ENCODE measurements at regions of chr14 and their contacts with region 1.

Region 1: GRCh38 chr14:23286020-23286905 is at the start of gene HOMEZ:
- DNase-seq: peak; percentile 100
- ATAC-seq: peak; percentile 99
- H3K4me3 ChIP-seq: peak within 1 kb of the TSS; percentile 83 to 96 (median 83)
- H3K27ac ChIP-seq: peak within 1 kb of the TSS; percentile 83
- H3K4me1 ChIP-seq: peaks cover 26% of the 10 kb centered on the region
- H3K27me3 ChIP-seq: no peaks in the 10 kb centered on the region; a peak in 1 of 5 replicates
- CTCF ChIP-seq: peak; percentile 58
- EP300 ChIP-seq: peak in 1 of 2 experiments; percentile 48; a peak in 2 of 4 replicates
- POLR2A ChIP-seq: peak in 1 of 2 experiments; percentile 93; a peak in 2 of 4 replicates
- RAD21 ChIP-seq: no peak; the same call in 1 of the 2 replicates
- total RNA-seq, gene HOMEZ: 13.6 and 14.5 TPM in 2 replicates

Region 2: GRCh38 chr14:22761734-22762133 is 524.5 kb before region 1 on chr14:
- CTCF ChIA-PET with region 1: no interaction called
- POLR2A ChIA-PET with region 1: no interaction called
- in situ Hi-C with region 1: no loop called
- intact Hi-C with region 1: no loop called
- DNase-seq: no peak
- ATAC-seq: no peak
- H3K4me3 ChIP-seq: no peak overlapping the region
- H3K27ac ChIP-seq: no peak overlapping the region
- H3K4me1 ChIP-seq: peaks cover 9% of the 10 kb centered on the region
- H3K27me3 ChIP-seq: no peaks in the 10 kb centered on the region; a peak in 1 of 5 replicates
- CTCF ChIP-seq: no peak
- EP300 ChIP-seq: no peak
- POLR2A ChIP-seq: no peak
- RAD21 ChIP-seq: no peak

Region 3: DNA sequence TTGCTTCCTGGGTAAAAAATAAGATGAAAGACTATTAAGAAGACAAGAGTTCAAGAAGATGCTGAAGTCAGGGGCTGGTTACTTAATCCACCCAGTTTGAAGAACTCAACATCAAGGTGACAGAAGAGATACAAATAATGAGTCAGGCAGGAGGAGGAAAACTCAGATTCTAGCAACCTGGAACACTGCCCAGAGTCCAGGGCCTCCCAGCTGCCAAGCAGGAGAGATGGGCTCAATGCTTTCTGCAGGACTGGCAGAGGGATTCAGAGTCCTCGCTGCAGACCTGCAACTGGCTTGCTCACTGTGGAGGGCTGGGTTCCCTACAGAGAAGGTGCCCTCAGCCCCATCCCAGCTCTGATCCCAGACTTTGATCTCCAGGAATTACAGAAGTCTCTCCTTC is 138.6 kb before region 1 on chr14:
- CTCF ChIA-PET with region 1: no interaction called
- POLR2A ChIA-PET with region 1: no interaction called
- in situ Hi-C with region 1: no loop called
- intact Hi-C with region 1: no loop called
- DNase-seq: no peak
- ATAC-seq: no peak
- H3K4me3 ChIP-seq: no peak overlapping the region
- H3K27ac ChIP-seq: no peak overlapping the region
- H3K4me1 ChIP-seq: no peaks in the 10 kb centered on the region
- H3K27me3 ChIP-seq: peaks cover 7 to 37% of the 10 kb centered on the region in 2 experiments; a peak in 4 of 5 replicates
- CTCF ChIP-seq: no peak
- EP300 ChIP-seq: no peak
- POLR2A ChIP-seq: no peak
- RAD21 ChIP-seq: no peak

Region 4: GRCh38 chr14:23275412-23275811 is 10.9 kb before region 1 on chr14:
- CTCF ChIA-PET with region 1: no interaction called
- POLR2A ChIA-PET with region 1: interaction called, 43 read pairs
- in situ Hi-C with region 1: no loop called
- intact Hi-C with region 1: no loop called
- DNase-seq: no peak
- ATAC-seq: no peak
- H3K4me3 ChIP-seq: no peak overlapping the region
- H3K27ac ChIP-seq: no peak overlapping the region
- H3K4me1 ChIP-seq: peaks cover 8% of the 10 kb centered on the region
- H3K27me3 ChIP-seq: no peaks in the 10 kb centered on the region
- CTCF ChIP-seq: no peak
- EP300 ChIP-seq: no peak
- POLR2A ChIP-seq: 0 out of 4 replicates have a peak, but pooled peaks of 1 of the 2 experiments have one; percentile 17
- RAD21 ChIP-seq: no peak

Region 5: GRCh38 chr14:23301288-23301968 is 15.2 kb after region 1 on chr14:
- CTCF ChIA-PET with region 1: no interaction called
- POLR2A ChIA-PET with region 1: interaction called, 153 read pairs
- in situ Hi-C with region 1: no loop called
- intact Hi-C with region 1: loop called (anchors 1 kb)
- DNase-seq: peak; percentile 100
- ATAC-seq: peak; percentile 87
- H3K4me3 ChIP-seq: peak overlapping the region; percentile 67 to 88 (median 75)
- H3K27ac ChIP-seq: peak overlapping the region; percentile 91
- H3K4me1 ChIP-seq: peaks cover 57% of the 10 kb centered on the region
- H3K27me3 ChIP-seq: no peaks in the 10 kb centered on the region; a peak in 1 of 5 replicates
- CTCF ChIP-seq: peak; percentile 92
- EP300 ChIP-seq: peak in 1 of 2 experiments; percentile 54; a peak in 2 of 4 replicates
- POLR2A ChIP-seq: no peak
- RAD21 ChIP-seq: peak; percentile 87

Region 6: GRCh38 chr14:23306410-23307145 is 20.3 kb after region 1 on chr14 and contains the start of gene BCL2L2:
- CTCF ChIA-PET with region 1: no interaction called
- POLR2A ChIA-PET with region 1: interaction called, 153 read pairs
- in situ Hi-C with region 1: no loop called
- intact Hi-C with region 1: loop called (anchors 1 kb)
- DNase-seq: peak; percentile 98
- ATAC-seq: peak; percentile 76
- H3K4me3 ChIP-seq: peak within 1 kb of the TSS; percentile 95 to 99 (median 96)
- H3K27ac ChIP-seq: peak within 1 kb of the TSS; percentile 87
- H3K4me1 ChIP-seq: peaks cover 60% of the 10 kb centered on the region
- H3K27me3 ChIP-seq: no peaks in the 10 kb centered on the region; a peak in 1 of 5 replicates
- CTCF ChIP-seq: peak; percentile 54
- EP300 ChIP-seq: peak; percentile 69 to 85
- POLR2A ChIP-seq: peak in 1 of 2 experiments; percentile 90; a peak in 2 of 4 replicates
- RAD21 ChIP-seq: no peak
- total RNA-seq, gene BCL2L2: 26.6 and 28.1 TPM in 2 replicates

Region 7: GRCh38 chr14:23327947-23328744 is 41.9 kb after region 1 on chr14:
- CTCF ChIA-PET with region 1: no interaction called
- POLR2A ChIA-PET with region 1: interaction called, 165 read pairs
- in situ Hi-C with region 1: no loop called
- intact Hi-C with region 1: no loop called
- DNase-seq: peak; percentile 89
- ATAC-seq: peak; percentile 75
- H3K4me3 ChIP-seq: no peak overlapping the region
- H3K27ac ChIP-seq: no peak overlapping the region
- H3K4me1 ChIP-seq: peaks cover 22% of the 10 kb centered on the region
- H3K27me3 ChIP-seq: peaks cover 0 to 20% of the 10 kb centered on the region in 2 experiments; a peak in 2 of 5 replicates
- CTCF ChIP-seq: peak; percentile 95
- EP300 ChIP-seq: no peak
- POLR2A ChIP-seq: no peak; a peak in 1 of 4 replicates
- RAD21 ChIP-seq: peak; percentile 90

Region 8: DNA sequence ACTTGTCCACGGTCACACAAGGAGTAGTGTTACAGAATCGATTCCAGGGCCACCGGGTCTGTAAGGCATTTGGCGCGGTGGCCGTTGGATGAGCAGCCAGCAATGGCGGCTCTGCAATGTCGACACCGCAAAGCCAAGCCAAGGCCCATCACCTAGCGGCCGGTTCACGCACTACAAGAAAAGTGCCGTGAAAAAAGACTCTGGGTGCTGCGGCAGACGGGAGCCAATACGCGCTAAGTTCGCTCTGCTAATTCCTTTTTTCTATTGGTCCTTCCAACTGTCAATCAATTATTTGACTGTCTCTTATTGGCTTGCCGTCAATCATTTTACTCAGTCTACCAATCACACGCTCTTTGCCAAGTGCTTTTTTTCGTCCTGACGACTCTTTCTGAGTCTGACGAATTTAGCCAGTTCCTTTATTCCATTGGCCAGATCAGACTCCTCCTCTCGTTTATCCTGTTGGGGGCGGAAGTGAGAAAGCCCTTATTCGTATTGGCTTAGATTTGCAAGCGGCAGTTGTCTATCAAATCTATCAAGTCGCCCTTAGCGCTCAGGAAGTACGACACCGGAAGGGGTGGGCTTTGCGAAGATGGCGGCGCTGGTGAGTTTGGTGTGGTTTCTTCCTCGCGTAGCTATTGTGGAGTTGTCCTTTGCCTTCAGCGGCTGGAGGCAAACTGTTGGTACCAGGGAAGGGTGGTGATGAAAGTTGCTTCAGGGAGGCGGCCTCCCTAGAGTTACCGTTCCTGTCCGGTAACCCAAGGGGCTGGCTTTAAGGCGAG is 183.1 kb after region 1 on chr14 and contains the start of gene NGDN:
- CTCF ChIA-PET with region 1: no interaction called
- POLR2A ChIA-PET with region 1: no interaction called
- in situ Hi-C with region 1: no loop called
- intact Hi-C with region 1: loop called (anchors 1 kb)
- DNase-seq: peak; percentile 100
- ATAC-seq: peak; percentile 98
- H3K4me3 ChIP-seq: peak within 1 kb of the TSS; percentile 90 to 94 (median 93)
- H3K27ac ChIP-seq: peak within 1 kb of the TSS; percentile 70
- H3K4me1 ChIP-seq: peaks cover 14% of the 10 kb centered on the region
- H3K27me3 ChIP-seq: peaks cover 0 to 4% of the 10 kb centered on the region in 2 experiments; a peak in 1 of 5 replicates
- CTCF ChIP-seq: peak; percentile 62
- EP300 ChIP-seq: peak in 1 of 2 experiments; percentile 21; a peak in 2 of 4 replicates
- POLR2A ChIP-seq: peak; percentile 96 to 97
- RAD21 ChIP-seq: peak; percentile 72
- total RNA-seq, gene NGDN: 216 and 241 TPM in 2 replicates

Measured in HepG2 (cell line).